ENCODE measurements at regions of chr11 and their contacts with region 1.

Region 1: DNA sequence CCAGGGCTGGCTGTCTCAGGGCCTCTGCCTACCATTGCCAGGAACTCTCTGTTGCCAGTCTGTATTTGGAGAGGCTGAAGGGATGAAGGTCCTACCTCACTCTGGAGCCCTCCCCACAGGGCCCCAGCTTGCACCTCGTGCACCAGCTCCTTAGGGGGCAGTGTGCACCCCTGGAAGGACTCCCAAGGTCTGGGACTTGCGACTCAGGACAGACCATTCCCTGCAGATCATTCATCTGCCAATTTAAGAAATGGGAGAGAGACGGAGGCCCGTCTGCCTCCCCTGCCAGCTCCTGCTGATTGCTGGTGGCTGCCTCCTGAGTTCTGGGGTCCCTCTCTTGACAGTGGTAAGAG is 27.5 kb upstream of the MALAT1 start:
- DNase-seq: peak; percentile 84 to 91
- ATAC-seq: peak; percentile 82 to 88
- H3K4me3 ChIP-seq: peak overlapping the region; percentile 24; the same call in 2 of the 3 replicates
- H3K27ac ChIP-seq: peak overlapping the region; percentile 93 to 96
- H3K4me1 ChIP-seq: peaks cover 68% of the 10 kb centered on the region
- CTCF ChIP-seq: peak; percentile 61
- EP300 ChIP-seq: no peak
- POLR2A ChIP-seq: no peak
- RAD21 ChIP-seq: peak; percentile 68 to 83

Region 2: DNA sequence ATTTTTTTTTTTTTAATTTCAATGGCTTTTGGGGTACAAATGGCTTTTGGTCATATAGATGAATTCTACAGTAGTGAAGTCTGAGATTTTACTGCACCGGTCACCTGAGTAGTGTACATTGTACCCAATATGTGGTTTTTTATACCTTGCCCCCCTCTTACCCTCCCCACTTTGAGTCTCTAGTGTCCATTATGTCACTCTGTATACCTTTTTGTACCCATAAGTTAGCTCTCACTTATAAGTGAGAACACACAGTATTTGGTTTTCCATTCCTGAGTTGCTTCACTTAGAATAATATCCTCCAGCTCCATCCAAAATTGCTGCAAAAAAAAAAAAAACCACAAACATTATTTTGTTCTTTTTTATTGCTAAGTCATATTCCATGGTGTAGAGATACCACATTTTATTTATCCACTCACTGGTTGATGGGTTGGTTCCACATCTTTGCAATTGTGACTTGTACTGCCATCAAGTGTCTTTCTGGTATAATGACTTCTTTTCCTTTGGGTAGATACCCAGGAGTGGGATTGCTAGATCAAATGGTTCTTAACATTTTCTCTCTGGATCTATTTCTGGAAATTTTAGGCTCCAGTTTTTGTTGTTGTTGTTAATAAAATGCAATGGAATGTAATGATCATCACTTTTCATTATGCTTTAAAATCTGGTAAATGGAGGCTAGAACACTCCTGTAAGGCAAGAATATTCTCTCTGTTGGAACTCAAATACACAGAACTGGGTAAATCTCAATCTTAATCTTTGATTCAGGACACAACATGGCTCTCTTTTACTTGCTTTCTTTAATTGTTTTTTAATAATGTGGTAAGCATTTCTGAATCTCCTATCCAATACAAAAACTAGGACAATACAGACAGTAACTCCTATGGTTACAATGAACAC is 38.5 kb before region 1 on chr11:
- CTCF ChIA-PET with region 1: interaction called, 11 read pairs
- POLR2A ChIA-PET with region 1: interaction called, 7 read pairs
- DNase-seq: peak in 1 of 2 experiments; percentile 75
- ATAC-seq: no peak
- H3K4me3 ChIP-seq: no peak overlapping the region
- H3K27ac ChIP-seq: peak overlapping the region; percentile 43 to 55; a peak in 4 of 6 replicates
- H3K4me1 ChIP-seq: peaks cover 85% of the 10 kb centered on the region
- CTCF ChIP-seq: peak; percentile 52
- EP300 ChIP-seq: no peak
- POLR2A ChIP-seq: no peak
- RAD21 ChIP-seq: peak; percentile 58 to 59

Region 3: GRCh38 chr11:65448418-65449105 is 22.8 kb before region 1 on chr11:
- CTCF ChIA-PET with region 1: interaction called, 12 read pairs
- POLR2A ChIA-PET with region 1: interaction called, 8 read pairs
- DNase-seq: peak in 1 of 2 experiments; percentile 64
- ATAC-seq: peak; percentile 6 to 24; a peak in 5 of 6 replicates
- H3K4me3 ChIP-seq: no peak overlapping the region
- H3K27ac ChIP-seq: peak overlapping the region in 1 of 2 experiments; percentile 76; a peak in 3 of 6 replicates
- H3K4me1 ChIP-seq: peaks cover 71% of the 10 kb centered on the region
- CTCF ChIP-seq: no peak
- EP300 ChIP-seq: no peak
- POLR2A ChIP-seq: no peak
- RAD21 ChIP-seq: no peak

Region 4: DNA sequence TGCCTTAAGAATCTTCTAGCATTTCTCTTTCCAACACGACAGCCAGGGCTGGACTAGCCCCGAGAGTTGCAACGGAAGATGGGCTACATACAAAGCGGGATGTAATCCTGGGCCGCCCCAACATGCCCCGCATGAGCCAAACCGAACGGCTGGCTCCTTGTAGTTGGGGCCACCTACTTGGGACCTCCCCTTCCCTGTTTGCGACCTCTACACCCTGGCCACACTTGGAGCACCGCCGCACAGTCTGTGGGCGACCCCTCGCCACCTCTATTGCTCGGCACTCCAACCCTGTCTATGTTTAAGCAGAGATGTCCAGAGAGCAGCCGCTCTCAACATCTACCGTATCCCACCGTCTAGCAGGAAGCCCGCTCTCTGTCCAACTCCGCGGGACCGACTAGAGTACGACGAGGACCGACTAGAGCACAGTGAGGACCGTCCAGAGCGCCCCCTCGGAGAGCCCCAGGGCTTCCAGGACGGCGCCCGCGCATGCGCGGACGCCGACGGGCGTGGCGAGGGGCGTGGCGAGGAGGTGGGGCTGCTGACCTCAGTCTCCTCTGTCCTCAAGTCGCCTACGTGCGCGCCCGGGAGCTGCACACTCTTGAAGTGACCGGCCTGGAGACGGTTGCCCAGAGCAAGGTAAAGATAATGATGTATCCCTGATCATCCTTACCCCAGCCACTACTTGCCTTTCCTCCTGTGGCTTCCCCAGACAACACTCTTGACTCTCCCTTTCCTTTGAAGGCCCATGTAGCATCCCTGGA is 16.5 kb before region 1 on chr11:
- CTCF ChIA-PET with region 1: interaction called, 57 read pairs
- POLR2A ChIA-PET with region 1: interaction called, 10 read pairs
- DNase-seq: peak; percentile 88 to 91
- ATAC-seq: peak; percentile 85 to 86
- H3K4me3 ChIP-seq: peak overlapping the region; percentile 66
- H3K27ac ChIP-seq: peak overlapping the region; percentile 92 to 96
- H3K4me1 ChIP-seq: peaks cover 37% of the 10 kb centered on the region
- CTCF ChIP-seq: peak; percentile 37; the same call in 1 of the 3 replicates
- EP300 ChIP-seq: no peak
- POLR2A ChIP-seq: peak; percentile 90
- RAD21 ChIP-seq: no peak; a peak in 1 of 5 replicates

Region 5: GRCh38 chr11:65487413-65488272 is 16.3 kb after region 1 on chr11:
- CTCF ChIA-PET with region 1: interaction called, 947 read pairs
- POLR2A ChIA-PET with region 1: interaction called, 1,006 read pairs
- DNase-seq: peak; percentile 99 to 100
- ATAC-seq: peak; percentile 75 to 83
- H3K4me3 ChIP-seq: 0 out of 3 replicates have a peak overlapping the region, but pooled peaks have one; percentile 3
- H3K27ac ChIP-seq: peak overlapping the region; percentile 99 to 100
- H3K4me1 ChIP-seq: peaks cover 82% of the 10 kb centered on the region
- CTCF ChIP-seq: no peak
- EP300 ChIP-seq: peak in 1 of 2 experiments; percentile 51; a peak in 2 of 5 replicates
- POLR2A ChIP-seq: no peak
- RAD21 ChIP-seq: no peak; a peak in 1 of 5 replicates

Region 6: DNA sequence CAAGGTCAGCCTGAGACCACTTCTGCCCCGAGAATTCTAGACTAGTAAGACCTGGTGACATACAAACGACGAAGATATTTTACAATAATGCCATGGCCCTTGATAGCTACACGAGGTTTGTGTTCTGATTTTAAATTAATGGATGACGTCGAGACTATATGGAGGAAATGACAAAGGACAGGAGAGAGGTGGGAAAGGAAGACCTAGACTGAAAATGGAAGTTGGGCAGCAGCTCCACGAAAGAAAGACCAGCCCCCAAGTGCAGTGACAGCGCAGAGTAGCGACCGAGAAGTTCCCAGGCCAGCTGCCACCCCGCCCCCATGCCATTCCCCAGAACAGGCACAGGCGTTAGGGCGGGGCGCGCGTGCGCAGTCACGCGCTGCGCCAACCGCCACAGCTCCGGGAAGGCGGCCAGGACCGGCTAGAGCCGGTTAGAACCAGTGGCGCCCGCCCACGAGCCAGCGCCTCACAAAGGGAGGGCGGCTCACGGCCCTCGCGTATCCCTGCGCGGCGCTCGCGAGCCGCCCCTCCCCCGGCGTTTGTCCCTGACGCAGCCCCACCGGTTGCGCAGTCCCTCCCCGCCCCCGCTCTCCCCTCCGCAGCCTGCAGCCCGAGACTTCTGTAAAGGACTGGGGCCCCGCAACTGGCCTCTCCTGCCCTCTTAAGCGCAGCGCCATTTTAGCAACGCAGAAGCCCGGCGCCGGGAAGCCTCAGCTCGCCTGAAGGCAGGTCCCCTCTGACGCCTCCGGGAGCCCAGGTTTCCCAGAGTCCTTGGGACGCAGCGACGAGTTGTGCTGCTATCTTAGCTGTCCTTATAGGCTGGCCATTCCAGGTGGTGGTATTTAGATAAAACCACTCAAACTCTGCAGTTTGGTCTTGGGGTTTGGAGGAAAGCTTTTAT is 26.0 kb after region 1 on chr11:
- CTCF ChIA-PET with region 1: interaction called, 947 read pairs
- POLR2A ChIA-PET with region 1: interaction called, 1,006 read pairs
- DNase-seq: peak; percentile 74 to 99
- ATAC-seq: peak; percentile 72 to 79
- H3K4me3 ChIP-seq: peak overlapping the region; percentile 90
- H3K27ac ChIP-seq: peak overlapping the region; percentile 98 to 100
- H3K4me1 ChIP-seq: peaks cover 53% of the 10 kb centered on the region
- CTCF ChIP-seq: no peak
- EP300 ChIP-seq: peak; percentile 44 to 85; a peak in 3 of 5 replicates
- POLR2A ChIP-seq: 0 out of 2 replicates have a peak, but pooled peaks have one; percentile 13
- RAD21 ChIP-seq: peak; percentile 18 to 67; a peak in 4 of 5 replicates

Measured in A549 (cell line).